Uterus (tissue), 4 donors: ENCODE measurements at regions of chr1 and their contacts with region 1.

Region 1: GRCh38 chr1:234499119-234499942 is 20.4 kb upstream of the TARBP1 start:
- DNase-seq: peak; percentile 91 to 94
- H3K4me3 ChIP-seq: peak overlapping the region in 1 of 2 donors; percentile 25
- H3K27ac ChIP-seq: peak overlapping the region; percentile 87 to 89
- H3K4me1 ChIP-seq: peaks cover 0 to 7% of the 10 kb centered on the region in 2 donors
- H3K27me3 ChIP-seq: no peaks in the 10 kb centered on the region
- CTCF ChIP-seq: peak; percentile 93 to 98 (median 96)
- POLR2A ChIP-seq: no peak

Region 2: DNA sequence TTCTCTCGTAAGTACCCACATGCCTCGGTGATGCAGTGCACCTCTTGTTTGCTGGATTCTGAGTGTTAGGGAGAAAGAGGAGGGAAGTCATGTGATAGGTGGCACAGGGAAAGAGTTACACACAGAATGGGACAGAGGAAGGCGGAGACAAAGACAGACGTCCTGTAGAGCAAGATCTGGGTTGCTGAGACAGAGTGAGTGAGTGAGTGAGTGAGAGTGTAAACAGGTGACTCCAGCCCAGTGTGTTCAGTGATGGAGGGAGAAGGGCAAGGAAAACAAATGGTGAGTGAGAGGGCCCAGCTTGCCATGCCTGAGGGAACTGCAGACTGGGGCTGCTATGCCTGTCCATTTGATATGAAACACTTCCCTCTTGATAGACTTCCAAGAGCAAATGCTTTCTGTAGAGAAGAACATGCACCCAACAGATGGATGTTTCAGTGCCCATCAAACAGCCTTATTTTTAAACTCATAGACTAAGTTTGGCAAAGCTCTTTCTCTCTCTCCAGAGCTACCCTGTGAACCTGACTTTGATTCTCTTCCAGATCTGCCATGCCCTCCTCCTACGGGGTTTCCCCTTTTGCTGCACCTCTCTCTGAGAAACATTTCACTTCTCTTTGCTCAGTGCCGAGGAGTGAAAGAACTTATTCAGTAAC is 335.9 kb before region 1 on chr1:
- intact Hi-C with region 1: no loop called
- DNase-seq: no peak
- H3K4me3 ChIP-seq: no peak overlapping the region
- H3K27ac ChIP-seq: no peak overlapping the region
- H3K4me1 ChIP-seq: no peaks in the 10 kb centered on the region
- H3K27me3 ChIP-seq: no peaks in the 10 kb centered on the region
- CTCF ChIP-seq: no peak
- POLR2A ChIP-seq: no peak

Region 3: GRCh38 chr1:234533975-234534876 is 34.9 kb after region 1 on chr1:
- intact Hi-C with region 1: no loop called
- DNase-seq: peak; percentile 97 to 98
- H3K4me3 ChIP-seq: no peak overlapping the region
- H3K27ac ChIP-seq: peak overlapping the region; percentile 98 to 100
- H3K4me1 ChIP-seq: peaks cover 33 to 44% of the 10 kb centered on the region in 2 donors
- H3K27me3 ChIP-seq: no peaks in the 10 kb centered on the region
- CTCF ChIP-seq: no peak
- POLR2A ChIP-seq: no peak

Region 4: DNA sequence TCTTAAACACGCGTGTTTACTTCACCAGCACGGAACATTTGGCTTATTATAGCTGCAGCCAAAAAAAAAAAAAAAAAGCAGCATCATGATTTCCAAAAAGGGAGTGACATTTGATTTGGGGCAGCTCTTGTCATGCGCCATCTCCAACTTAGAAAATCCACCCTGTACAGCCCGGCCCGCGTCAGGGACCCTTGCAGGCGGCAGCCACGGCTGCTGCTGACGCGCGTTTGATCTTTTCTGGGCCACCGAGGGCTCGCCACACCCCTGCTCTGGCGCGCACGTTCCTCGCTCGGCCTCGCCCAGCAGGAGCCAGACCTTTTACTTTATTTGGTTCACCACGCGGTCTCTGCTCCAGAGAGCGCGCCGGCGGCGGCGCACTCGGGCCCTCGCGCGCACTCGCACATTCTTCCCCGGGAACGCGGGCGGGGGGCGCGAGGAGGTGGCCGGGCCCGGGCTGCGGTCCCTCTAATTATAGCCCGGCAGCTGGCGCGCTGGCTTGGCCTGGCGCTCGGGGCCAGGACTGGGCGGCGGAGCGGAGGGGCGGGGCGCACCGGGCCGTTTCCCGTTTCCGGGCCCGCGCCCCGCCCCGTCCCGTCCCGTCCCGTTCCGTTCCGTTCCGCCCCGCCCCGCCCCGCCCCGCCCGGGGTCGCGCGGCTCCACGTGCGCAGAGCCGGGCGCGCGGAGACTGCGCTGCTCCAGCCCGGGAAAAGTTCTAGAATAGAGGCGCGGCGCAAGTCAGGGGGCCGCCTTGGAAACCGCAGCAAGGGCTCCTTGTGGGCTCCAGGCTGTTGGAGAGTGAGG is 100.5 kb after region 1 on chr1:
- intact Hi-C with region 1: loop called (anchors 10 kb)
- DNase-seq: peak; percentile 79 to 87
- H3K4me3 ChIP-seq: peak overlapping the region; percentile 23 to 63
- H3K27ac ChIP-seq: peak overlapping the region; percentile 99 to 100
- H3K4me1 ChIP-seq: peaks cover 19 to 22% of the 10 kb centered on the region in 2 donors
- H3K27me3 ChIP-seq: no peaks in the 10 kb centered on the region
- CTCF ChIP-seq: peak in 3 of 4 experiments; percentile 5 to 31 (median 20)
- POLR2A ChIP-seq: peak; percentile 43 to 92

Region 5: GRCh38 chr1:234721476-234722269 is 222.3 kb after region 1 on chr1:
- intact Hi-C with region 1: no loop called
- DNase-seq: peak; percentile 80 to 91
- H3K4me3 ChIP-seq: no peak overlapping the region
- H3K27ac ChIP-seq: peak overlapping the region; percentile 96 to 98
- H3K4me1 ChIP-seq: peaks cover 25 to 54% of the 10 kb centered on the region in 2 donors
- H3K27me3 ChIP-seq: no peaks in the 10 kb centered on the region
- CTCF ChIP-seq: no peak
- POLR2A ChIP-seq: peak in 1 of 2 donors; percentile 31

Region 6: DNA sequence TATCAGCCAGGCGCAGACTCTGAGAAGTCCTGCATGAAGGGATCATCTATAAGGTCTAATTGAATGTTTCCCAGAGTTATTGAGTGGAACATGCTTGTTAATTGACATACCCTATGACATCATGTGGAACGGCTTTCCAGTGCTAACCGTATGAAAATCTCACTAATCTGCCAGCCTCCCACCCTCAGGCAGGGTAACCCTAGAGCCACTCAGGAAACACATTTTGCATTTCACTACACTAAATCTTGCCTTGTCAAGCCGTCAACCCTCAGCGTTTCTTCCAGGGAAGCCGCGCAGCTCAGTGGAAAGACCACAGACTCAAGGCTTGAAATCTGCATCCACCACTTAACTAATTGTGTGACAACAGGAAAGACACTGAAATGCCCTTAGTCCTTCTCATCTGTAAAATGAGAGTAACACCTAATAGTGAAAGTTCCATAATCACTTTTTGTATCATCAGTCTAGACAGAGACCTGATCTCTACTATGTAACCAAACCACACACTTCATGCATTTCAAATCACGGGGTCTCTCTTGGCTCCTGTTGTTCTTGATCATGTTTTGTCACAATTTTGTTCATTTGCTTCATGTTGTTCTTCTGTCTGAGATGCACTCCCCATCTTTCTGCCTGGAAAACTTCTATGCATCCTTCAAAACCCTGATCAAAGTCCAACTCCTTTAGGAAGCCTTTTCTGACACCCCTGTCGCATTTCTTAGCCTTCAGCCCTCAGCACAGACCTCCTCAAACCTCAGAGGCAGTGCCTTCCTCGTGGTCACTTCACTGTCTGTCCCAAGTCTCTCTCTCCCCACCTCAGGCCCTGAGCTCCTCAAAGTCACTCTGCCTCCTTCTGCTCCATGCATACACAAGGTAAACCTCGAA is 382.8 kb after region 1 on chr1:
- intact Hi-C with region 1: loop called (anchors 10 kb)
- DNase-seq: peak in 1 of 2 donors; percentile 1
- H3K4me3 ChIP-seq: no peak overlapping the region
- H3K27ac ChIP-seq: no peak overlapping the region
- H3K4me1 ChIP-seq: peaks cover 0 to 1% of the 10 kb centered on the region in 2 donors
- H3K27me3 ChIP-seq: no peaks in the 10 kb centered on the region
- CTCF ChIP-seq: no peak
- POLR2A ChIP-seq: no peak